ENCODE measurements at regions of chr20 and their contacts with region 1.

Region 1: GRCh38 chr20:10171864-10172751 is 46.5 kb upstream of the SNAP25 start:
- DNase-seq: peak; percentile 43
- H3K4me3 Mint-ChIP-seq: peak overlapping the region; percentile 30
- H3K27ac Mint-ChIP-seq: no peak overlapping the region
- H3K4me1 Mint-ChIP-seq: peaks cover 3% of the 10 kb centered on the region
- H3K27me3 Mint-ChIP-seq: peaks cover 34% of the 10 kb centered on the region

Region 2: GRCh38 chr20:10219452-10219791 is 47.3 kb after region 1 on chr20:
- CTCF ChIA-PET with region 1: no interaction called
- intact Hi-C with region 1: loop called (anchors 2 kb)
- DNase-seq: peak; percentile 67
- H3K4me3 Mint-ChIP-seq: no peak overlapping the region
- H3K27ac Mint-ChIP-seq: no peak overlapping the region
- H3K4me1 Mint-ChIP-seq: peaks cover 13% of the 10 kb centered on the region
- H3K27me3 Mint-ChIP-seq: peaks cover 40% of the 10 kb centered on the region